Posterior cingulate gyrus (tissue), 11 donors: ENCODE measurements at regions of chr21 and their contacts with region 1.

Region 1: GRCh38 chr21:32412162-32413014 is at the start of gene EVA1C:
- DNase-seq: peak in 9 of 10 donors; percentile 36 to 92 (median 50)

Region 2: DNA sequence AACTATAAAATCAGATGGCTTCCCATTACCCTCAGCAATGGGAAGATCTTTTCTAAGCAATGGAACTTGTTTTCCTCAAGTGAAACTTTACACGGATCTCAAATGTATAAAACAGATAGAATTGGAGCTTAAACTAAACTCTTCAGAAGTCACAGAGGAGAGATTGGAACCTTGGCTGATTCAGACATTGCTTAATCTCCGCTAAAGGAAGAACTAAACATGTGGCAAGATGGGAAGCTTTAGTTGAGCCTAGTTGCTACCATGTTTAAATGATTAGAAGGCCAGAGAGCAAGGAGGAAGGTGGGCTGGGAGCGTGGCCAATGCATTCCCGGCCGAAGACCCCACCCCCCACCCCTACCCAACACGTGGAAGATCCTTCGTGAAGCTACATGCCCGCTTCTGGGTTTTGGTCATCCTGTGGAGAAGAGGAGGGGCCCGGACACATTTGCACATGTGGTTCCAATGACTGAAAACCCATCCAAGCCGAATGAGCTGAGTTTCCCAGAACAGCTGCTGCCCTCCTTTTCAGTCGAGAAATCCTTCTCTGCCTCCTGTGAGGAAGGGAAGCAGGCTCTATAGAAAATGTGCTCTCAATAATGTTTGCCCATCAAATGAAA is 297.9 kb before region 1 on chr21:
- intact Hi-C with region 1: no loop called
- DNase-seq: no peak

Region 3: DNA sequence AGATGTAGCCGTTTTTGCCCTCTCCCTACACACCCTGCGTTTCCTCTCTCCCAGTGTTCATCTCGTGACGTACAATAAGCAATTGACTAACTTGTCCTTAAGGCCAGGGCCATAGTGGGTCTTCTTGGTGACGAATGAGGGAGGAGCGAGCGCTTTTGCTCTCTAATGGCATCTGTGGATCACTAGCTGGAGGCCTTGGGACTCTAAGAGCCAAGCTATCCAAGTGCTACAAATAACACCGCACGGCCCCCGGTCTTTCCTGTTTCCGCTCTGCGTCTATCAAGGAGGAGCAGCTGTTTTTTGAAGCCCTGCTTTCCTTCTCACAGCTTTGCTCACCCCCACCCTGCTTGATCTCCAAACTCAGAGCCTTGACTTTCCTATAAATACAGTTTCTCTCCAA is 25.3 kb after region 1 on chr21:
- intact Hi-C with region 1: no loop called
- DNase-seq: peak in 1 of 10 donors; percentile 62

Region 4: DNA sequence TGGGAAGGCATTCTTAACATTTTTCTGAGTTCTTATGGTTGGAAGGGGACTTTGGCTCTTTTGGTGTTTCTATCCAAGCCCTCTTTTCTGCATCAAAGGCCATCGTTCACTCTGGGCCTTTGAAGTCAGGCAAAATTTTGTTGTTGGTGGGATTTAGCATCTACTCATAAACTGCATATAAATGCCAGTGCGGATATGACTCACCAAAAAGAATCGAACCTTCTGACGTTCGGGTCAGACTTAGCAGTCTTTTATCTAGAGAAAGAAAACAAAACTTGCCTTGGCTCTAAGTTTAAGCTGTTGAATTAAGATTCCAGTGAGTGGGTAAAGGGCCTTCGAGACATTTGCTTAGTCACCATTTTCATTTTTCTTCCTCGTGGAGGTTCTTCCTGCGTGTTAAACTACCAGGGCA is 51.5 kb after region 1 on chr21:
- intact Hi-C with region 1: no loop called
- DNase-seq: peak in 1 of 10 donors; percentile 4

Region 5: DNA sequence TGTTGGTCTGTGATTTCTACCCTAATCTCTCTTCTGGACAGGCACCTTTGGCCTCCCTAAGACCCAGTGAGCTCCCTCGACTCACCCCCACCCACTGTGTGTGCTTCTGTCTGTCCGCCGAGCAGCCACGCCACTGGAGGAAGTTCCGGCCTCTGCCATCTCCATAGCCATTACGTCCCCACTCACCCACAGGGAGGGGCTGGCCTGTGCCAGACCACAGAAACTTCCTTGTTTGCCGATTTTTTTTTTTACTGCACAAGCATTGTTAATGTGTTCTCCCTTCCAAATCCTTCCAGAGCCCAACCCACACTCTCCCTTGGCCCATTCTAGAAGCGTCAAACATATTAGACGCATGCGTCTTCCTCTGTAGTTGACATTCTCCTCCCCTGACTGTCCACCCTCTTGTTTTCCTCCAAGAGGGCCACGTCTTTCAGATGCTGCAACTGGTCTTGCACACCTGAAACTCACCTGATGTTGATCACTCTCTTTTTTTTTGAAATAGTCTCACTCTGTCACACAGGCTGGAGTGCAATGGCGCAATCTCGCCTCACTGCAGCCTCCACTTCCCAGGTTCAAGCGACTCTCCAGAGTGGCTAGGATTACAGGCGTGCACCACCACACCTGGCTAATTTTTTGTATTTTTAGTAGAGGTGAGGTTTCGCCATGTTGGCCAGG is 72.5 kb after region 1 on chr21:
- intact Hi-C with region 1: loop called (anchors 10 kb)
- DNase-seq: peak in 5 of 10 donors; percentile 43 to 95 (median 59)